H1 (cell line): ENCODE measurements at regions of chr5 and their contacts with region 1.

Region 1: GRCh38 chr5:522899-523440 is 1.3 kb downstream of the SLC9A3 start:
- DNase-seq: no peak
- H3K4me3 ChIP-seq: peak overlapping the region; percentile 14 to 60 (median 38); a peak in 5 of 8 replicates
- H3K27ac ChIP-seq: no peak overlapping the region
- H3K4me1 ChIP-seq: peaks cover 0 to 23% (median 10%) of the 10 kb centered on the region in 4 experiments; a peak in 6 of 7 replicates
- H3K27me3 ChIP-seq: peaks cover 45 to 68% (median 64%) of the 10 kb centered on the region in 4 experiments
- CTCF ChIP-seq: no peak
- EP300 ChIP-seq: no peak
- POLR2A ChIP-seq: no peak
- RAD21 ChIP-seq: no peak; a peak in 1 of 4 replicates

Region 2: GRCh38 chr5:538801-539468 is 16.0 kb after region 1 on chr5:
- CTCF ChIA-PET with region 1: interaction called, 10 read pairs
- POLR2A ChIA-PET with region 1: interaction called, 5 read pairs
- DNase-seq: no peak
- H3K4me3 ChIP-seq: no peak overlapping the region
- H3K27ac ChIP-seq: no peak overlapping the region
- H3K4me1 ChIP-seq: no peaks in the 10 kb centered on the region
- H3K27me3 ChIP-seq: no peaks in the 10 kb centered on the region; a peak in 2 of 7 replicates
- CTCF ChIP-seq: no peak
- EP300 ChIP-seq: no peak
- POLR2A ChIP-seq: no peak
- RAD21 ChIP-seq: no peak

Region 3: GRCh38 chr5:556909-557441 is 34.0 kb after region 1 on chr5:
- CTCF ChIA-PET with region 1: no interaction called
- POLR2A ChIA-PET with region 1: no interaction called
- DNase-seq: no peak
- H3K4me3 ChIP-seq: no peak overlapping the region
- H3K27ac ChIP-seq: no peak overlapping the region
- H3K4me1 ChIP-seq: 0 out of 7 replicates have a peak, but pooled peaks cover 0 to 3% (median 0%) of the 10 kb centered on the region in 4 experiments
- H3K27me3 ChIP-seq: peaks cover 0 to under 1% (median 0%) of the 10 kb centered on the region in 4 experiments; a peak in 1 of 7 replicates
- CTCF ChIP-seq: no peak
- EP300 ChIP-seq: no peak
- POLR2A ChIP-seq: no peak
- RAD21 ChIP-seq: no peak

Region 4: DNA sequence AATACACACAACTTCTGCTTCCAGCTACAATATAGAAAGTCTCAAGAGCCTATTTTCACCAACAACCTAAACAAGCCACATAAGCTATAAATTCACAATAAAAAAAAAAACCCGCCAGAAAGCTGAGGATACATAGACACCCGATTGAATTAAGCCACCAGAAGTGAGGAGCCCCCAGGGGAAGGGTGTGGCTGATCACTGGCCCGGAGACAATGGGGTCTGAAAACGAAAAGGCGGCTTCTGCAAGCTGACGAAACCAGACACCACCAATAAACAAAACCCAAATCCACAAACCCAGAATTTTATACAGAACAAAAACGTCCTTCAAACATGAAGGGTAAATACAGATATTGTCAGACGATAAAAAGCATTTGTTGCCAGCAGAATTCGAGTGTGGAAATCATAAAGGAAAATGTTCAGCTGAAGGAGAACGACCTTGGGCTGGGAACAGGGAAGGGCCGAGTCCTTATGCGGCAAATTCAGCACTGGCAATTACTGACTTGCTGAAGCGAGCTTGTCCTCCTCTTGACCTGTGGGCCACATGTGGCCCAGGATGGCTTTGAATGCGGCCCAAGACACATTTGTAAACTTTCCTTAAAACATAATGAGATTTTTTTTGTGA is 49.5 kb after region 1 on chr5:
- CTCF ChIA-PET with region 1: no interaction called
- POLR2A ChIA-PET with region 1: no interaction called
- DNase-seq: no peak
- H3K4me3 ChIP-seq: no peak overlapping the region
- H3K27ac ChIP-seq: no peak overlapping the region
- H3K4me1 ChIP-seq: no peaks in the 10 kb centered on the region
- H3K27me3 ChIP-seq: peaks cover 0 to 3% (median 0%) of the 10 kb centered on the region in 4 experiments; a peak in 1 of 7 replicates
- CTCF ChIP-seq: no peak
- EP300 ChIP-seq: no peak
- POLR2A ChIP-seq: no peak
- RAD21 ChIP-seq: no peak